Esophagus muscularis mucosa (tissue), 4 donors: ENCODE measurements at regions of chr4 and their contacts with region 1.

Region 1: DNA sequence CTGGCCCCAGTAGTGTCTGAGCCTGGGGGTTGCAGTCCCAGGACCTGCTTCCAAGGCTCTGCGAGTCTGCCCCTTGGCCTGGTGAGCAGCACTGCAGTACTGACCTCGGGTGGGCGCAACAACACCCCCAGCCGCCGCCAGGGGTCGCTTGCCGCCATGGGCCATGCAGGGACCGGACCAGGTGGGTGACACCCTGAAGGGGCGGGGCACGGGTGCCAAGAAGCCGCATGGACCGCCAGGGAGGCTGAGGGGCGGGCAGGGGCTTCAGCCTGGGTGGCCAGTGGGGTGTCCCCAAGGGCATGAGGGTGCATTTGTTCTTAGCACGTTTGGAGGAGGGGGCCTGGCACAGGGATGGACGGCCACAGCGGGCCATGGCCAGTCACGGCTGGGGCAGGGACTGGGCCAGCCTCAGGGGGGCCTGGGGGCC is 25.0 kb downstream of the TACC3 start:
- DNase-seq: no peak
- H3K4me3 ChIP-seq: no peak overlapping the region
- H3K27ac ChIP-seq: no peak overlapping the region
- H3K4me1 ChIP-seq: peaks cover 0 to 7% (median 5%) of the 10 kb centered on the region in 4 donors
- H3K27me3 ChIP-seq: peaks cover 0 to 44% (median 2%) of the 10 kb centered on the region in 4 donors
- CTCF ChIP-seq: peak; percentile 59 to 77 (median 69)
- EP300 ChIP-seq: no peak
- POLR2A ChIP-seq: no peak

Region 2: GRCh38 chr4:1809754-1810511 is 63.7 kb after region 1 on chr4:
- intact Hi-C with region 1: loop called (anchors 2 kb)
- DNase-seq: no peak
- H3K4me3 ChIP-seq: no peak overlapping the region
- H3K27ac ChIP-seq: no peak overlapping the region
- H3K4me1 ChIP-seq: no peaks in the 10 kb centered on the region
- H3K27me3 ChIP-seq: peaks cover 0 to 17% (median 0%) of the 10 kb centered on the region in 4 donors
- CTCF ChIP-seq: peak; percentile 61 to 71 (median 71)
- EP300 ChIP-seq: no peak
- POLR2A ChIP-seq: no peak